Vagina (tissue), 2 donors: ENCODE measurements at regions of chr5 and their contacts with region 1.

Region 1: GRCh38 chr5:55601204-55601618 is 66.4 kb upstream of the PLPP1 start:
- DNase-seq: peak in 1 of 2 donors; percentile 98
- H3K4me3 ChIP-seq: peak overlapping the region in 1 of 2 donors; percentile 14
- H3K27ac ChIP-seq: peak overlapping the region; percentile 78
- H3K4me1 ChIP-seq: peaks cover 76% of the 10 kb centered on the region
- H3K27me3 ChIP-seq: no peaks in the 10 kb centered on the region
- CTCF ChIP-seq: no peak
- POLR2A ChIP-seq: no peak

Region 2: DNA sequence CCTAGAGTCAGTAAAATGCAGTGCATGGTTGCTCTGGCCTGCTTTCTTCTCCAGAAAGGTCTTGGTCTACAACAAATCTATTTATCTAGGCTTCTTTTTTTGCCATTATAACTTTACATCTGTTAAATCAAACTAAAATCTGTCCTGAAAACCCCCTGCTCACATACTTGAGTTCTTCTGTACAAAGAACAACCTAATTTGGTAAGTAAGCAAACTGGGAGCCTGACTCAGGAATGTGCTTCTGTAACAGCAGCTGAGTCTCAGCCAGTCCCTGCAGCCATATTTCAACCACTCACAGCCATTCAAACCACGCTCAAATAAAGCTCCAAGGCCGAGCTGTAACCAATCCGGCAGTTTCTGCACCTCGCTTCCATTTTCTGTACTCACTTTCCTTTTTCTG is 162.2 kb before region 1 on chr5:
- intact Hi-C with region 1: loop called (anchors 5 kb)
- DNase-seq: no peak
- H3K4me3 ChIP-seq: no peak overlapping the region
- H3K27ac ChIP-seq: peak overlapping the region; percentile 83
- H3K4me1 ChIP-seq: peaks cover 56% of the 10 kb centered on the region
- H3K27me3 ChIP-seq: no peaks in the 10 kb centered on the region
- CTCF ChIP-seq: no peak
- POLR2A ChIP-seq: no peak

Region 3: GRCh38 chr5:55534436-55535198 is 66.6 kb before region 1 on chr5 and contains the start of gene PLPP1:
- intact Hi-C with region 1: loop called (anchors 2 kb)
- DNase-seq: peak in 1 of 2 donors; percentile 96
- H3K4me3 ChIP-seq: peak within 1 kb of the TSS; percentile 72 to 94
- H3K27ac ChIP-seq: peak within 1 kb of the TSS; percentile 95
- H3K4me1 ChIP-seq: peaks cover 34% of the 10 kb centered on the region
- H3K27me3 ChIP-seq: no peaks in the 10 kb centered on the region
- CTCF ChIP-seq: no peak
- POLR2A ChIP-seq: peak; percentile 40 to 81
- total RNA-seq, gene PLPP1: 283 TPM

Region 4: DNA sequence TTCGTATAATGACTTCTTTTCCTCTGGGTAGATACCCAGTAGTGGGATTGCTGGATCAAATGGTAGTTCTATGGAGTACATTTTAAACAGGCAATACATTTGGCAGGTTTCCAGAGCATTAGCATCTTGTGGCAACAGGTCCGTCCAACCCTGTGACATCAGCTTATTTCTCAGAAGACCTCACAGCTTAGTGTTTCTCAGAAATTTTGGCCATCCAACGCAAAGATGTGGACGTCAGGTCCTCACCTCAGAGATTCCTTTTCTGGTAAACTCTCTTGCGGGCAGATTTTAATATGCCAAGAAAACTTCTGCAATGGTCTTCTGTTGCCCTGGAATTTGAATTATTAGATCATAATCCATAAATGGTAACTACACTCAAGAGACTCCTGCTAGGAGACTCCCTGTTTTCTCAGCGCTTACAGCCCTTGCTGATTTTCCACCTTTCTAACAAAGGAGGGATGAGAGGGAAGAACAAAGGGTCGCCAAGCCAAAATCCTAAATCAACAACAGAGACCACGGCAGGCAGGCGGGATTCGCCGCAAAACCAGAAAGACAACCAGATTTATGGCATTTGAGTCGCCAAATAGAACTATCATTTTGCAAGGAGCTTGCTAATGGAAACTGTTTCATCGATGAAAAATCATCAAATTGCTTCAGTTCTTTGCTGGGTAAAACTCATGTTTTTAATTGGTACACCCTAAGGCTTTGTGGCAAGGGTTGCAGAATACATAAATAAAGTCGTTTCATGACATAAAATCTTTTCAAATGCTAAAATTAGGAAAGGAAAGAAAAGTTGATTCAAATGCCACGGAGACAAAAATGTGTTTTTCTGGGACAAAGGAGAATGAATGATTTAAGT is 32.3 kb before region 1 on chr5:
- intact Hi-C with region 1: loop called (anchors 2 kb)
- DNase-seq: no peak
- H3K4me3 ChIP-seq: no peak overlapping the region
- H3K27ac ChIP-seq: peak overlapping the region; percentile 38
- H3K4me1 ChIP-seq: peaks cover 28% of the 10 kb centered on the region
- H3K27me3 ChIP-seq: no peaks in the 10 kb centered on the region
- CTCF ChIP-seq: no peak
- POLR2A ChIP-seq: no peak